ENCODE measurements at regions of chr9 and their contacts with region 1.

Region 1: DNA sequence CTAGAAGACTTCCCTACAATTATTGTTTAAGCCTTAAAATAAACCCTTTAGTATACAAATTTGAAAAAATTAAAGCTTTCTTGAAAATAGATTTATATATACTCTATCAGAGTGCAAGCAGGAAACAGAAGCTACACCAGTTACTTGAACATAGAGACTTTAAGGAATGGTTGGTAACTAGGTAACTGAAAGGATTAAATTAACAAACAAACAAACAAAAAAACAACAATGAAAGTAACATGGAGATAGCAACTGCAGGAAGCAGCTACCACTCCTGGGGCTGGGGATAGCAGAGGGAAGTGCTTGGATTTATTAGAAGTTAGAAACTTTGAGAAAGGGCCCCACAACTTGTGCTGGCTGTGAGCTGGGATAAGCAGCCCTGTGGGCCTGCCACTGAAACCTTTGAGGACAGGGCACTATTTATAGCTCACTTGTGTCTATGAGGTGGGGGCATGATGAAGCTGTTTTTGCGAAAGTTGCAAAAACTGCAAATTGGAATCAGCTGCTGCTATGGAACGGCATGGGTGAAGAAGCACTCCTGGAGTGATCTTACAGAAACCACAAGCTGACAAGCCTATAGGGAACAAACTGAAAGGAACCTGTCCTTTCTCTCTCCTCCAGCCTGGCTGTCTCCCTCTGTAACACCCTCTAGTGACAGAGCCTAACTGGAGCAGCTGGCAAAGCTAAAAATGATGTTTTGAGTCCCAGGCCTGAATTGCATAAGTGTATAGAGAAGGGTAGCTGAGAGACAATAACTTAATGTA is 91.3 kb upstream of the RANBP6 start:
- DNase-seq: peak; percentile 41
- ATAC-seq: peak; percentile 92
- H3K4me3 ChIP-seq: no peak overlapping the region
- H3K27ac ChIP-seq: no peak overlapping the region
- H3K4me1 ChIP-seq: no peaks in the 10 kb centered on the region
- H3K27me3 ChIP-seq: no peaks in the 10 kb centered on the region
- CTCF ChIP-seq: peak; percentile 21 to 38 (median 26); a peak in 3 of 6 replicates
- EP300 ChIP-seq: no peak
- POLR2A ChIP-seq: no peak
- RAD21 ChIP-seq: peak; percentile 41

Region 2: DNA sequence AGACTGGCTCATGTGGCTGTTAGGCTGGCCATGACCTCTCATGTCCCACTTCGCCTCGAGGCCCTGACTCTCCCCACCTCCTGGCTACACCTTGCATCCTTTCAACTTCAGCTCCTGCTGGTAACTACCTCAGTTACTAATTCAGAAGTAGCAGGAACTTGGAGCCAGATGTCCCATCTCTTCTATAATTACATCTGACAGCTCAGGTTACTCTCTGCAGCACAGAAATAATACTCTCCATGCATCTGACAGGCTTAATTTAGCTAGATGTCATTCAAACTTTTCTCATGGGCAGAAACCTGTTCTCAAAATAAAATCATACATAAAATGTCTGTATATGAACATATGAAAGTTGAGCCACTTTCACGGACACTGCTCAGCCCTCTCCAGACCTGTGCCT is 16.7 kb after region 1 on chr9:
- CTCF ChIA-PET with region 1: interaction called, 12 read pairs
- POLR2A ChIA-PET with region 1: interaction called, 3 read pairs
- RAD21 ChIA-PET with region 1: no interaction called
- SMC1A ChIA-PET with region 1: interaction called, 4 read pairs
- in situ Hi-C with region 1: no loop called
- intact Hi-C with region 1: no loop called
- DNase-seq: no peak
- ATAC-seq: no peak
- H3K4me3 ChIP-seq: no peak overlapping the region
- H3K27ac ChIP-seq: no peak overlapping the region
- H3K4me1 ChIP-seq: no peaks in the 10 kb centered on the region
- H3K27me3 ChIP-seq: no peaks in the 10 kb centered on the region
- CTCF ChIP-seq: no peak
- EP300 ChIP-seq: no peak
- POLR2A ChIP-seq: no peak
- RAD21 ChIP-seq: no peak

Region 3: GRCh38 chr9:6184749-6185645 is 78.2 kb after region 1 on chr9:
- CTCF ChIA-PET with region 1: no interaction called
- POLR2A ChIA-PET with region 1: no interaction called
- RAD21 ChIA-PET with region 1: no interaction called
- SMC1A ChIA-PET with region 1: interaction called, 11 read pairs
- in situ Hi-C with region 1: no loop called
- intact Hi-C with region 1: no loop called
- DNase-seq: peak; percentile 61
- ATAC-seq: peak; percentile 97
- H3K4me3 ChIP-seq: peak overlapping the region; percentile 46; the same call in 1 of the 2 replicates
- H3K27ac ChIP-seq: peak overlapping the region; percentile 48
- H3K4me1 ChIP-seq: peaks cover 33% of the 10 kb centered on the region
- H3K27me3 ChIP-seq: no peaks in the 10 kb centered on the region
- CTCF ChIP-seq: no peak
- EP300 ChIP-seq: peak in 1 of 2 experiments; percentile 82; a peak in 1 of 4 replicates
- POLR2A ChIP-seq: no peak
- RAD21 ChIP-seq: peak; percentile 8; the same call in 1 of the 2 replicates